Activated CD4-positive, alpha-beta memory T cell treated with anti-CD3 and anti-CD28 coated beads for 36 hours (primary cell): ENCODE measurements at regions of chr7 and their contacts with region 1.

Region 1: DNA sequence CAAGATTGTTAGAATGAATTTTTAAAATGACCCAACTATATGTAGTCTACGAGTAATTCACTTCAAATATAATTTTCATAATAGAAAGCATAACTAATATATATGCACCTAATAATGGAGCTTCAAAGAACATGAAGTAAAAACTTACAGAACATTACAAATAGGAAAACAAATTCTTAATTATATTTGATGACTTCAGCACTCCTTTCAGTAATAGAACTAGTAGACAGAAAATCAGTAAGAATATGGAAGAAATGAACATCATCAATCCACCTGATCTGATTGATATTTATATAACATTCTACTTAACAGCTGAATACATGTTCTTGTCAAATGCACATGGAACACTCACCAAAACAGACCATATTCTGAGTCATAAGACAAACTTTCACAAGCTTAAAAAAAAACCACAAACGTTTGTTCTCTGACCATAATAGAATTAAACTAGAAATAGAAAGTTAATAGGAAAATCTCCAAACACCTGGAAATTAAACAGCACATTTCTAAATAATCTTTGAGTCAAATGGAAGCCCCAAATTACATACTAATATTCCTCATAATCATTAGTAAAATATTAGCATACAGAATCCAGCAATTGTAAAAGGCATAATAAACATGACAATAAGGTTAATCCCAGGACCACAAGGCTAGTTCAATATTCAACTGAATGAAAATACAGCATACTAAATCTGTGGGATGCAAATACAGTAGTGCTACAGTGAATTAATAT is 48.0 kb downstream of the BRAF start:
- DNase-seq: no peak
- H3K4me3 Mint-ChIP-seq: no peak overlapping the region
- H3K27ac Mint-ChIP-seq: no peak overlapping the region
- H3K4me1 Mint-ChIP-seq: peaks cover 44% of the 10 kb centered on the region
- H3K27me3 Mint-ChIP-seq: no peaks in the 10 kb centered on the region

Region 2: GRCh38 chr7:140828741-140829140 is 47.9 kb before region 1 on chr7:
- CTCF ChIA-PET with region 1: no interaction called
- POLR2A ChIA-PET with region 1: no interaction called
- intact Hi-C with region 1: no loop called
- DNase-seq: no peak
- H3K4me3 Mint-ChIP-seq: no peak overlapping the region
- H3K27ac Mint-ChIP-seq: no peak overlapping the region
- H3K4me1 Mint-ChIP-seq: no peaks in the 10 kb centered on the region
- H3K27me3 Mint-ChIP-seq: no peaks in the 10 kb centered on the region

Region 3: DNA sequence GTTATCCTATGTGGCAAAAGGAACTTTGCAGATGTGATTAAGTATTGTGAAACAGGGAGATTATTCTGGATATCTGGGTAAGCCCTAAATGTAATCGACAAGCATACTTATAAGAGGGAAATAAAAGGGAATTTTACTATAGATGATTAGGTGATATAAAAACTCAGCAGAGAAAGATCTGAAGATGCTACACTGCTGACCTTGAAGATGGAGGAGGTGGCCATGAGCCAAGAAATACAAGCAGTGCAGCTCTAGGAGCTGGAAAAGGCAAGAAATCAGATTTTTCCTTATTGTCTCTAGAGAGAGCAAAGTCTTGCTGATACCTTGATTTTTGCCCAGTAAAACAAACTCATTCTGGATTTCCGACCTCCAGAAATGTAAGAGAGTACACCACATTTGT is 19.6 kb before region 1 on chr7:
- CTCF ChIA-PET with region 1: no interaction called
- POLR2A ChIA-PET with region 1: no interaction called
- intact Hi-C with region 1: loop called (anchors 2 kb)
- DNase-seq: no peak
- H3K4me3 Mint-ChIP-seq: no peak overlapping the region
- H3K27ac Mint-ChIP-seq: no peak overlapping the region
- H3K4me1 Mint-ChIP-seq: peaks cover 35% of the 10 kb centered on the region
- H3K27me3 Mint-ChIP-seq: no peaks in the 10 kb centered on the region